GM12878 (cell line): ENCODE measurements at regions of chr10 and their contacts with region 1.

Region 1: GRCh38 chr10:121753726-121754476 is 155.7 kb upstream of the FGFR2 start:
- DNase-seq: peak; percentile 46
- ATAC-seq: peak; percentile 95
- H3K4me3 ChIP-seq: no peak overlapping the region
- H3K27ac ChIP-seq: peak overlapping the region; percentile 62
- H3K4me1 ChIP-seq: peaks cover 8% of the 10 kb centered on the region
- H3K27me3 ChIP-seq: no peaks in the 10 kb centered on the region
- CTCF ChIP-seq: peak; percentile 7 to 31 (median 27); a peak in 2 of 6 replicates
- EP300 ChIP-seq: no peak; a peak in 1 of 4 replicates
- POLR2A ChIP-seq: no peak
- RAD21 ChIP-seq: peak; percentile 34; the same call in 1 of the 2 replicates

Region 2: GRCh38 chr10:121696854-121697253 is 57.0 kb before region 1 on chr10:
- CTCF ChIA-PET with region 1: no interaction called
- POLR2A ChIA-PET with region 1: no interaction called
- RAD21 ChIA-PET with region 1: no interaction called
- SMC1A ChIA-PET with region 1: no interaction called
- in situ Hi-C with region 1: no loop called
- intact Hi-C with region 1: no loop called
- DNase-seq: no peak
- ATAC-seq: peak; percentile 64; the same call in 2 of the 3 replicates
- H3K4me3 ChIP-seq: no peak overlapping the region
- H3K27ac ChIP-seq: no peak overlapping the region
- H3K4me1 ChIP-seq: no peaks in the 10 kb centered on the region
- H3K27me3 ChIP-seq: no peaks in the 10 kb centered on the region; a peak in 2 of 4 replicates
- CTCF ChIP-seq: peak; percentile 31 to 54 (median 32); a peak in 4 of 6 replicates
- EP300 ChIP-seq: no peak
- POLR2A ChIP-seq: no peak
- RAD21 ChIP-seq: 0 out of 2 replicates have a peak, but pooled peaks have one; percentile 20

Region 3: GRCh38 chr10:121831777-121832176 is 77.9 kb after region 1 on chr10:
- CTCF ChIA-PET with region 1: no interaction called
- POLR2A ChIA-PET with region 1: no interaction called
- RAD21 ChIA-PET with region 1: no interaction called
- SMC1A ChIA-PET with region 1: no interaction called
- in situ Hi-C with region 1: no loop called
- intact Hi-C with region 1: loop called (anchors 5 kb)
- DNase-seq: no peak
- ATAC-seq: no peak
- H3K4me3 ChIP-seq: no peak overlapping the region
- H3K27ac ChIP-seq: no peak overlapping the region
- H3K4me1 ChIP-seq: no peaks in the 10 kb centered on the region
- H3K27me3 ChIP-seq: no peaks in the 10 kb centered on the region
- CTCF ChIP-seq: no peak
- EP300 ChIP-seq: no peak
- POLR2A ChIP-seq: no peak
- RAD21 ChIP-seq: no peak